Left ventricle myocardium superior (tissue), 1 donor: ENCODE measurements at regions of chr16 and their contacts with region 1.

Region 1: DNA sequence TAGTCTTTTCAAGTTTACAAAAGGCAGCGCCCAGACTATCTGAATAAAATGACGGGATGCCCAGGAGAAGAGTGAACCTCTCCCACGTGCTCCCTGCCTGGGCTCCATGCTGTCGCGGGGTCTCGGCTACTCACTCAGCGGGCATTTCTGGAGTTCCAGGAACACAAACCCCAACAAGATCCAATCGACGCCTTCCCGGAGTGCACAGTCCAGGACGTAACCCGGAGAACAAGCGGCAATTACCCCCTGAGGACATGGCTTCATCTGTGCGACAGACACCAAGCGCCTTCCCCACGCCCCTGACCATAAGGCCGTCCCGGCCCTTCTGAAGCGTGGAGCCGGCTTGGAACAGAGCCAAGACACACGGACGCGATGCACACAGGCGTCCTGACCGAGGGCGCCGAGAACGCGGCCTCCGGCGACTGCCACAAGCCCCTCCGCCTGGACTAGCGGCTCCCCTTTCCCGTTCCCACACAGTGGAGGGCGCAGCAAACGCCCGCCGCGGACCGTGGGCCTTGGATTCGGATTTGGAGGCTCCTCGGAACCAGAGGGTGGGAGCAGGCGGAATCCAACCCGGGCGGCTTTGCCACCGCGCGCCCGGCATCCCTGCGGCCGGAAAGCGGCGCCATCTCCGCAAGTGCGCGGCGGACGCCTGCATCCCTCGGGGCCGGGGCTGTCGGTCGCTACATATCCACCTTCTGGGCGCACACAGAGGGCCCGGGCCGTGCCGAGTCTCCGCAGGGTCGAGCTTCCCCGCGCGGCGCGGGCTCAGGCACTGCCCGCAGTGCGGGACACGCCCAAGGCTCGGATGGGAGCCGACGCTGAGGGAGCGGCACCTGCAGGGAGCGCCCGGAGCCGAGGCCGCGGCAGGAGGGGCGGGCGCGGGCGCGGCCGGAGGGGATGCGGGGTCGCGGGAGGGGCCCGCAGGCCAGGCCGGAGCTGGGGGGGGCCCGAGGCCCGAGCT is 725 bp downstream of the ABCA3 start:
- DNase-seq: peak; percentile 74
- ATAC-seq: peak; percentile 38

Region 2: DNA sequence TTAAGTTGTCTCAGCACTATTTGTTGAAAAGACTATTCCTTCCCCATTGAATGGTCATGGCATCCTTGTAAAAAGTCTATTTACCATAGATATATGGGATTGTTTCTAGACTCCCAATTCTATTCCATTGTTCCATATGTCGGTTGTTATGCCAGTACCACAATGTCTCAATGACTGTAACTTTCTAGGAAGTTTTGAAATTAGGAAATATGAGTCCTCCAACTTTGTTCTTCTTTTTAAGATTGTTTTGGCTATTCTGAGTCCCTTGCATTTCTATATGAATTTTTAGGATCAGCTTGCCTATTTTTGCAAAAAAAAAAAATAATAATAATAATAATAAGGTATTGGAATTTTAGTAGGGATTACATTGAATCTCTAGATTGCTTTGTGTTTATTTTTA is 43.7 kb after region 1 on chr16:
- intact Hi-C with region 1: no loop called
- DNase-seq: no peak
- ATAC-seq: no peak

Region 3: GRCh38 chr16:2497116-2497630 is 157.4 kb after region 1 on chr16:
- intact Hi-C with region 1: loop called (anchors 10 kb)
- DNase-seq: peak; percentile 89
- ATAC-seq: peak; percentile 69